HepG2 (cell line): ENCODE measurements at regions of chr4 and their contacts with region 1.

Region 1: DNA sequence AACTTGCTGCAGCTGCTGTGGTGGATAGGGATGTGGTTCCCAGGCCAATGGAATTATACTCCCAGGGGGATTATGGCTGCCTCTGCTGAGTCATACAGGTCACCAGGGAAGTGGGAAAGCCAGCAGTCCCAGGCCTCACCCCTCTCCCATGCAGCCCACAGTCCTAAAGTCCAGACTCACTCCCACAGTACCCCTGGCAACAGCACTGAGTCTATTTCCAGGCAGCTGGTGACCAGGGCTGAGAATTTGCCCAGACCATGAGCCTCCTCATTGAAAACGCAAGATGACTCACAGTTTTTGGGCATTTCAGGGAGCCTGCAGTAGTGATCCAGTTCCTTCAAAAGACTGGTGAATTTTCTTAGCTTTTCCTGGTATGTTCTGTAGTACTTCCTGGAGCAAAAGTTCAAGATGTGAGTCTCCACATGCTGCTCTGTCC is 137.6 kb downstream of the NPNT start:
- DNase-seq: peak; percentile 37
- ATAC-seq: peak; percentile 56
- H3K4me3 ChIP-seq: no peak overlapping the region
- H3K27ac ChIP-seq: no peak overlapping the region
- H3K4me1 ChIP-seq: peaks cover 72% of the 10 kb centered on the region
- H3K27me3 ChIP-seq: no peaks in the 10 kb centered on the region
- CTCF ChIP-seq: no peak
- EP300 ChIP-seq: no peak
- POLR2A ChIP-seq: no peak
- RAD21 ChIP-seq: no peak

Region 2: GRCh38 chr4:105708530-105709391 is 324.1 kb before region 1 on chr4 and contains the starts of genes GSTCD and INTS12:
- CTCF ChIA-PET with region 1: no interaction called
- POLR2A ChIA-PET with region 1: no interaction called
- in situ Hi-C with region 1: no loop called
- intact Hi-C with region 1: loop called (anchors 10 kb)
- DNase-seq: peak; percentile 82
- ATAC-seq: peak; percentile 93
- H3K4me3 ChIP-seq: peak within 1 kb of the TSS; percentile 80 to 98 (median 82)
- H3K27ac ChIP-seq: peak within 1 kb of the TSS; percentile 90
- H3K4me1 ChIP-seq: peaks cover 40% of the 10 kb centered on the region
- H3K27me3 ChIP-seq: no peaks in the 10 kb centered on the region; a peak in 1 of 5 replicates
- CTCF ChIP-seq: peak; percentile 42; the same call in 1 of the 2 replicates
- EP300 ChIP-seq: peak; percentile 79 to 91; a peak in 3 of 4 replicates
- POLR2A ChIP-seq: peak; percentile 90 to 91
- RAD21 ChIP-seq: peak; percentile 50; the same call in 1 of the 2 replicates
- total RNA-seq, gene GSTCD: 30.8 and 38.7 TPM in 2 replicates
- total RNA-seq, gene INTS12: 21.1 and 22.9 TPM in 2 replicates

Region 3: GRCh38 chr4:105998171-105998589 is 34.7 kb before region 1 on chr4:
- CTCF ChIA-PET with region 1: no interaction called
- POLR2A ChIA-PET with region 1: interaction called, 3 read pairs
- in situ Hi-C with region 1: no loop called
- intact Hi-C with region 1: loop called (anchors 2 kb)
- DNase-seq: peak; percentile 89
- ATAC-seq: peak; percentile 99
- H3K4me3 ChIP-seq: no peak overlapping the region; a peak in 2 of 6 replicates
- H3K27ac ChIP-seq: peak overlapping the region; percentile 58
- H3K4me1 ChIP-seq: peaks cover 45% of the 10 kb centered on the region
- H3K27me3 ChIP-seq: no peaks in the 10 kb centered on the region
- CTCF ChIP-seq: no peak
- EP300 ChIP-seq: peak in 1 of 2 experiments; percentile 67; a peak in 1 of 4 replicates
- POLR2A ChIP-seq: no peak
- RAD21 ChIP-seq: no peak